ENCODE measurements at regions of chr14 and their contacts with region 1.

Region 1: GRCh38 chr14:60349663-60350365 is 100.8 kb downstream of the PPM1A start:
- DNase-seq: peak in 3 of 5 donors; percentile 15 to 26 (median 26)
- H3K4me3 ChIP-seq: no peak overlapping the region
- H3K4me3 Mint-ChIP-seq: no peak overlapping the region
- H3K27ac ChIP-seq: no peak overlapping the region
- H3K27ac Mint-ChIP-seq: no peak overlapping the region
- H3K4me1 ChIP-seq: no peaks in the 10 kb centered on the region
- H3K4me1 Mint-ChIP-seq: peaks cover 1 to 7% (median 5%) of the 10 kb centered on the region in 4 donors
- H3K27me3 ChIP-seq: no peaks in the 10 kb centered on the region
- H3K27me3 Mint-ChIP-seq: peaks cover 1 to 8% of the 10 kb centered on the region in 2 donors

Region 2: GRCh38 chr14:60339571-60339970 is 10.2 kb before region 1 on chr14:
- CTCF ChIA-PET with region 1: interaction called, 15 read pairs
- POLR2A ChIA-PET with region 1: no interaction called
- intact Hi-C with region 1: no loop called
- DNase-seq: no peak
- H3K4me3 ChIP-seq: no peak overlapping the region
- H3K4me3 Mint-ChIP-seq: no peak overlapping the region
- H3K27ac ChIP-seq: no peak overlapping the region
- H3K27ac Mint-ChIP-seq: no peak overlapping the region
- H3K4me1 ChIP-seq: no peaks in the 10 kb centered on the region
- H3K4me1 Mint-ChIP-seq: no peaks in the 10 kb centered on the region
- H3K27me3 ChIP-seq: peaks cover 5% of the 10 kb centered on the region
- H3K27me3 Mint-ChIP-seq: peaks cover 26 to 27% of the 10 kb centered on the region in 2 donors

Region 3: GRCh38 chr14:60561845-60562746 is 212.3 kb after region 1 on chr14:
- CTCF ChIA-PET with region 1: interaction called, 3 read pairs
- POLR2A ChIA-PET with region 1: no interaction called
- intact Hi-C with region 1: loop called (anchors 5 kb)
- DNase-seq: peak in 1 of 5 donors; percentile 4
- H3K4me3 ChIP-seq: no peak overlapping the region
- H3K4me3 Mint-ChIP-seq: no peak overlapping the region
- H3K27ac ChIP-seq: no peak overlapping the region
- H3K27ac Mint-ChIP-seq: no peak overlapping the region
- H3K4me1 ChIP-seq: no peaks in the 10 kb centered on the region
- H3K4me1 Mint-ChIP-seq: no peaks in the 10 kb centered on the region
- H3K27me3 ChIP-seq: no peaks in the 10 kb centered on the region
- H3K27me3 Mint-ChIP-seq: peaks cover 0 to 4% of the 10 kb centered on the region in 2 donors

Region 4: DNA sequence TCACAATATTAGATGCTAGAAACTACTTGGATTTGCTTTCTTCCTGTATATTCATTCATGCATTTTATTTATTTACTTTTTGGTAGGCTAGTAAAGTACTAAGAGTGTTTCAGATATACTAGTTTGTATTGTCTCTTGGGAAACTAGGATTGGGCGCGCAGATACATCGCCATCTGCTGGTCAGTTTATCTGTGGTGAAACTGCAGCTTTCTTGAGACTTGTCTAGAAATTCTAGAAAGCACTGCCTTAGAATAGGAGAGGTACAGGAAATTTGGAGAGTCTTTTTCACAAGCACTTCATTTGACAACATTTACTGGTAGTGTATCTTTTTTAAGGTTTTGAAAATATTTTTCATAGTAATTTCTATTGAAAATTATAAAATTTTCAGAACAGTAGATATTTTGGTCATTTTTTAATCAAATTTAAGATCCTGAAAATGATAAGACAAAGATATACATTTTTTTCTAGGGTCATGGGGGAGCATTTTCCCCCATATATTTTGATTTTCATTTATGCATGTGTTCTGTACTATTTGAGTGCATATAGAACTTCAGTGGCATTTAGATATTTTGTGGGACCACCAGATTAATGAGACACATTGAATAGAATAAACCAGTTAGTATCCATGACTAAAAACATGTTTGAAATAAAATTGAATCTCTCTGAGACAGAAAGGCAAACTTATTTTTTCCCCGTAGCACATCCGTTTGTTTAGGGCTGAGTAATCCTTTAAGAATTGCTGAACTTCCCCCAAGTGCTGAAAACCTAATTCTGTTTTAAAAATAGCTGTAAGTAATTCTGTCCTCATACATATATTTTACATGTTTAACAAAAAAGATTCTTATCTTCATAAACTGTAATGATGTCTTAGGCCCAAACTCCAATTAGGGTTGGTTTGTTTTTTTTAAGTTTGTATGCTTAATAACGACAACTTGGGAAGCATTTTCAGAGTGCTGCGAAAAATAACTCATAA is 675.7 kb after region 1 on chr14:
- CTCF ChIA-PET with region 1: interaction called, 5 read pairs
- POLR2A ChIA-PET with region 1: no interaction called
- intact Hi-C with region 1: loop called (anchors 1 kb)
- DNase-seq: peak; percentile 38 to 49 (median 47)
- H3K4me3 ChIP-seq: no peak overlapping the region
- H3K4me3 Mint-ChIP-seq: no peak overlapping the region
- H3K27ac ChIP-seq: no peak overlapping the region
- H3K27ac Mint-ChIP-seq: no peak overlapping the region
- H3K4me1 ChIP-seq: no peaks in the 10 kb centered on the region
- H3K4me1 Mint-ChIP-seq: peaks cover 0 to under 1% (median 0%) of the 10 kb centered on the region in 4 donors
- H3K27me3 ChIP-seq: no peaks in the 10 kb centered on the region
- H3K27me3 Mint-ChIP-seq: no peaks in the 10 kb centered on the region

Region 5: DNA sequence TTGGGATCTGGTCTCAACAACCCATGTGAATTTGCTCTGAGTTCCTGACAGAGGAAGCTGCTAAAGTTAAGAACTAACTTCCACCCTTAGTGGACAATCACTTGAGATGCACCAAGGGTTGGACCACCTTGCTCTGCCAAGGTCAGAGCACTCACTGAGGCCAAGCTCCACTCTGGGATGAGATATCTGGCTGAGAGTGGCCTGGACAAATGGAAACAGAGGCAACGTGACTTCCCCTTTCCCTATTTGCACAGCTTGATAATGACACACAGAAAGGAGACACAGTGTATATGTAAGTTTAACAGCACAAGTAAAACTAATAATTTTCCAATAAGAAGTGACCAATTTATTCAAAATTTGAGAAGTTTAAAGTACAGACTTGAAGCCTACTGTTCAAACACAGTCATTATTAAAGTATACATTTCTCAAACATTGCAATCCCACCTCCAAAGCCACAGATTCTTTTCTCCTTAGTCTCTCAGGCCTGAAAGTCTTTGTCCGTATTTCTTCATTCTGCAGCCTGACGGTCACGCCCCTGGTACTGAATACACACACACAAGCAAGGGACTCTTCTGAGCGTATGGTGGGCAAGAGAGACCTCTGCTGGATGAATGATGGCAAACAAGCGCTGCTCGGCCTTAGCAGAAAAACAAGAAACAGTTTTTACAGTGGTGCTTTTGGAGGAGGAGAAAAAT is 902.7 kb after region 1 on chr14:
- CTCF ChIA-PET with region 1: interaction called, 40 read pairs
- POLR2A ChIA-PET with region 1: no interaction called
- intact Hi-C with region 1: no loop called
- DNase-seq: peak; percentile 49 to 69 (median 61)
- H3K4me3 ChIP-seq: no peak overlapping the region
- H3K4me3 Mint-ChIP-seq: no peak overlapping the region
- H3K27ac ChIP-seq: no peak overlapping the region
- H3K27ac Mint-ChIP-seq: peak overlapping the region in 1 of 7 donors; percentile 12
- H3K4me1 ChIP-seq: no peaks in the 10 kb centered on the region
- H3K4me1 Mint-ChIP-seq: peaks cover 0 to 3% (median under 1%) of the 10 kb centered on the region in 4 donors
- H3K27me3 ChIP-seq: peaks cover 3% of the 10 kb centered on the region
- H3K27me3 Mint-ChIP-seq: peaks cover 1 to 5% of the 10 kb centered on the region in 2 donors